ENCODE measurements at regions of chr9 and their contacts with region 1.

Region 1: GRCh38 chr9:97921959-97922724 is at the start of gene TRMO:
- DNase-seq: peak; percentile 97 to 99 (median 98)
- H3K4me3 ChIP-seq: peak within 1 kb of the TSS; percentile 92
- H3K4me3 Mint-ChIP-seq: peak within 1 kb of the TSS; percentile 87 to 96 (median 90)
- H3K27ac ChIP-seq: peak within 1 kb of the TSS; percentile 100
- H3K27ac Mint-ChIP-seq: peak within 1 kb of the TSS; percentile 98 to 100 (median 99)
- H3K4me1 ChIP-seq: peaks cover 47% of the 10 kb centered on the region
- H3K4me1 Mint-ChIP-seq: peaks cover 48 to 59% (median 49%) of the 10 kb centered on the region in 3 donors
- H3K27me3 ChIP-seq: no peaks in the 10 kb centered on the region
- H3K27me3 Mint-ChIP-seq: peaks cover 0 to 9% of the 10 kb centered on the region in 2 donors
- total RNA-seq, gene TRMO: 19.1 to 19.2 TPM

Region 2: DNA sequence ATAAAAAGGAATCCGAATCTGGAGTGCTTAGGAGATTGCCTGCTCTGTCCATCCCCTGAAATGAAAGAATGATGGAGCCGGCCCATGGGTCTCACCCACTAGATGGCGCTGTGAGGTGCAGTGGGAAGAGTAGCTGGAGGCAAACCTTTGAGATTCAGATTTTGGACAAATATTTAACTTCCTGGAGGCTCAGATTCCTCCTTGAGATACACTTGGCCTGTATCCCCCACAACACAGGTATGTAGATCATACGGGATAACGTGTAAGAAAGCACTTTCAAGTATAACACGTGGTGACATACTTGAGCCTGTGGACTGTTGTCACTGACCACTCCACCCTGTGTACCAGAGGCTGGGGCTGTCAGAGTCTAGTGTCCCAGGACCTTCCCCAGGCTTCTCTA is 32.1 kb before region 1 on chr9:
- CTCF ChIA-PET with region 1: interaction called, 32 read pairs
- POLR2A ChIA-PET with region 1: interaction called, 3 read pairs
- DNase-seq: peak; percentile 31 to 73 (median 48)
- H3K4me3 ChIP-seq: no peak overlapping the region
- H3K4me3 Mint-ChIP-seq: no peak overlapping the region
- H3K27ac ChIP-seq: no peak overlapping the region
- H3K27ac Mint-ChIP-seq: peak overlapping the region in 3 of 8 donors; percentile 32 to 75 (median 42)
- H3K4me1 ChIP-seq: peaks cover 9% of the 10 kb centered on the region
- H3K4me1 Mint-ChIP-seq: peaks cover 3 to 7% (median 6%) of the 10 kb centered on the region in 3 donors
- H3K27me3 ChIP-seq: no peaks in the 10 kb centered on the region
- H3K27me3 Mint-ChIP-seq: no peaks in the 10 kb centered on the region

Region 3: DNA sequence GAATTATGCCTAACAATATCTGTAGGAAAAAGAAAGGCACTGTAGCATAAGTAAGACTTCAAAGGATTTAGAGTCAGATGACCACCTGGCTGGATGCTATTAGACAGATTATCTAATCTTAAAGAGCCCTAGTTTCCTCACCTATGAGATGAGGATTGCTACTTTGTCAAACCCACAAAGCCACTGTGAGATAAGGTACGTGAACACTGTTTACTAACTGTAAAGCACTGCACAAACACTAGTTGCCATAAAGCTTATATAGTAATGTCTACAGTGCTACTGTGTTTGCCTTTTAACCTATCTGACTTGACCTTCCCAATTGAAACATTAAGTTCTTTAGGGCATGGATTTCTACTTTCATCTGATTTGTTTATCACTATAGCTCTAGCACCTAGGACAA is 10.2 kb before region 1 on chr9:
- CTCF ChIA-PET with region 1: interaction called, 109 read pairs
- POLR2A ChIA-PET with region 1: interaction called, 55 read pairs
- DNase-seq: no peak
- H3K4me3 ChIP-seq: no peak overlapping the region
- H3K4me3 Mint-ChIP-seq: peak overlapping the region in 3 of 7 donors; percentile 21 to 27 (median 22)
- H3K27ac ChIP-seq: no peak overlapping the region
- H3K27ac Mint-ChIP-seq: peak overlapping the region; percentile 76 to 95 (median 91)
- H3K4me1 ChIP-seq: peaks cover 57% of the 10 kb centered on the region
- H3K4me1 Mint-ChIP-seq: peaks cover 73 to 91% (median 89%) of the 10 kb centered on the region in 3 donors
- H3K27me3 ChIP-seq: no peaks in the 10 kb centered on the region
- H3K27me3 Mint-ChIP-seq: no peaks in the 10 kb centered on the region

Region 4: DNA sequence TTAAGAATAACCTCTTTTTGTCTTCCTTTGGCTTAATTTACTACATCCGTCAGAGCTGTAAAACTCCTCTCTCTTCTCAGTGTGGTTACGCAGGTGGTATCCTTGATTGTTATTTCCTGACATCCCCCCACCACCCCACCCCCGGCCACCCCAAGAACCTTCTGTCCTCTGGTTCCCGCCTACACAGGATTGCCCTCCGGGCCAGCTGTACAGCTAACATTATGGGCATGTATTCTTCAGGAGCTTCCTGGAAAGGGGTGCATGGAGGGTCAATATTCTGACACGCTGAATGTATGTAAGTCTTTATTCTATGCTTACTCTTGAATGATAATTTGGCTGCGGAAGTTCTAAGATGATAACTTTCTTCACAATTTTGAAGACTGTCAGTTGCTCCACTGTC is 48.0 kb after region 1 on chr9:
- CTCF ChIA-PET with region 1: no interaction called
- POLR2A ChIA-PET with region 1: no interaction called
- DNase-seq: peak in 1 of 5 donors; percentile 30
- H3K4me3 ChIP-seq: no peak overlapping the region
- H3K4me3 Mint-ChIP-seq: no peak overlapping the region
- H3K27ac ChIP-seq: no peak overlapping the region
- H3K27ac Mint-ChIP-seq: no peak overlapping the region
- H3K4me1 ChIP-seq: no peaks in the 10 kb centered on the region
- H3K4me1 Mint-ChIP-seq: no peaks in the 10 kb centered on the region
- H3K27me3 ChIP-seq: no peaks in the 10 kb centered on the region
- H3K27me3 Mint-ChIP-seq: peaks cover 17 to 26% of the 10 kb centered on the region in 2 donors

Region 5: DNA sequence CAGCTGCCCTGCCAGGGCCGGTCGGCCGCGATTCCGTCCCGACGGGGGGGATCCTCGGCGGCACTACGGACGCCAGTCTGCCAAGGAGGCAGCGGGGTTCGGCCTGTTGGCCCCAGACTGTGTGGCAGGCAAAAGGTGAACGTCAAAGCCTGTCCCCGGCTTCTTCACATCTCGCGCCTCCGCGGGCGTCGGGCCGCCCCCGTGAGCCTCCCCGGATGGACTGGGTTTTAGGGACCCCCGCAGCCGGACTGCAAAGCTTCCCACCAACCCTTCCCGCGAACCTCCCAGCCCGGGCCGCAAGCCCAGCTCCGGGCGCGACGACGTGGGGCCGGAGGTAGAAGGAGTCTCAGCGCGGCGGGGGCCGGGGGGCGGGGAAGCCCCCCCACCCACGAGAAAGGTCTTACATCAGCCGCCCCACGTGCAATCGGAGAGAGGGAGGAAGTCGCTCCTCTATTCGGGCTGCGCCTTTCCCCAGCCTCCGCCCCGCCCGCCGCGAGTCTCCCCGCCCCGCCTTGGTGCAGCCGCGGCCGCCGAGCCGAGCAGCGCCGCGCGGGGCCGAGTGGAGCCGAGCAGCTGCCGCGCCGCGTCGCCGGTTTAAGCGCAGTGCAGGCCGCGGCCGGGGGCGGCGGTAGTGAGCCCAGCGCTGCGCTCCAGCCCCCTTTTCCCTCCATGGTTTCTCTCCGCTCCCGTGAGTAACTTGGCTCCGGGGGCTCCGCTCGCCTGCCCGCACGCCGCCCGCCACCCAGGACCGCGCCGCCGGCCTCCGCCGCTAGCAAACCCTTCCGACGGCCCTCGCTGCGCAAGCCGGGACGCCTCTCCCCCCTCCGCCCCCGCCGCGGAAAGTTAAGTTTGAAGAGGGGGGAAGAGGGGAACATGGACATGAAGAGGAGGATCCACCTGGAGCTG is 60.8 kb after region 1 on chr9 and contains the start of gene ANP32B:
- CTCF ChIA-PET with region 1: interaction called, 61 read pairs
- POLR2A ChIA-PET with region 1: interaction called, 74 read pairs
- DNase-seq: peak; percentile 88 to 96 (median 93)
- H3K4me3 ChIP-seq: peak within 1 kb of the TSS; percentile 65
- H3K4me3 Mint-ChIP-seq: peak within 1 kb of the TSS; percentile 82 to 98 (median 90)
- H3K27ac ChIP-seq: peak within 1 kb of the TSS; percentile 83
- H3K27ac Mint-ChIP-seq: peak within 1 kb of the TSS; percentile 54 to 96 (median 84)
- H3K4me1 ChIP-seq: peaks cover 56% of the 10 kb centered on the region
- H3K4me1 Mint-ChIP-seq: peaks cover 29 to 39% (median 37%) of the 10 kb centered on the region in 3 donors
- H3K27me3 ChIP-seq: no peaks in the 10 kb centered on the region
- H3K27me3 Mint-ChIP-seq: no peaks in the 10 kb centered on the region
- total RNA-seq, gene ANP32B: 331 to 341 TPM

Region 6: GRCh38 chr9:98056269-98057137 is 134.4 kb after region 1 on chr9 and contains the start of gene NANS:
- CTCF ChIA-PET with region 1: interaction called, 10 read pairs
- POLR2A ChIA-PET with region 1: interaction called, 10 read pairs
- DNase-seq: peak; percentile 87 to 94 (median 88)
- H3K4me3 ChIP-seq: peak within 1 kb of the TSS; percentile 76
- H3K4me3 Mint-ChIP-seq: peak within 1 kb of the TSS; percentile 94 to 99 (median 96)
- H3K27ac ChIP-seq: peak within 1 kb of the TSS; percentile 72
- H3K27ac Mint-ChIP-seq: peak within 1 kb of the TSS; percentile 91 to 99 (median 96)
- H3K4me1 ChIP-seq: peaks cover 16% of the 10 kb centered on the region
- H3K4me1 Mint-ChIP-seq: peaks cover 18 to 32% (median 30%) of the 10 kb centered on the region in 3 donors
- H3K27me3 ChIP-seq: no peaks in the 10 kb centered on the region
- H3K27me3 Mint-ChIP-seq: no peaks in the 10 kb centered on the region
- total RNA-seq, gene NANS: 33.2 to 34.8 TPM

Measured in CD8-positive, alpha-beta memory T cell (primary cell).